Left cardiac atrium (tissue), 4 donors: ENCODE measurements at regions of chr11 and their contacts with region 1.

Region 1: DNA sequence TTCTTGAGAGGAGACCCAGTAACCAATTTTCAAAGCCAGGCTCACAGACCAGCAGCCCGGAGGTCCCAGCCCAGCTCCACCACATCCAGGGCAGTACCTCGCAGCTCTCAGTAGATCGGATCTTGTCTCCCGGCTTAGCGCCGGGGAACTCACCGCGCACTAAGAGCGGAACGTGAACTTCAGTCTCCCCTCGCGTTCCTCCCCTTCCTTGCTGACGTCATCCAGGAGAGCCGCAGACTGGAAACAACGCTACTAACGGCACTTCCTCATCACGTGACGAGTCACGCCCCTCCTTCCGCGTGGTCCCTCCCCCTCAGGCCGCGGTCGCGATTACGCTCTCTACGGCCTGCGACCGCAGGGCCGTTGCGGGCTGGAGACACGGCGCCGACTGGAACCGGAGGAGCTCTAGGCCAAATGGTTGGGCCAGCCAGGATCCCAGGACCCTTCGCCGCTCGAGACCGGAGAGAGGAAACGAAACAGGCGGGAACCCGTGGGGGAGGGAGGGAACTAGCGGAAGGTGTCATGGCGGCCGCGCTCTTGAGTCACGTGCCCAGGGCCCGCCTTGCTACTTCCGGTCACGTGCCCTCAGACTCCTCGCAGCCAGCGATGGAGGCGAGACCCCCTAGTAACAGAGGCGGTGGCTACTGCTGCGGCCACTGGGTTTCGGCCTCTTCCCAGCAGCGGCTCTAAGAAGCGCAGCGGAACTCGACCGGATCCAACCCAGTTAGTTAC is at the starts of genes GTF2H1 and HPS5:
- DNase-seq: peak; percentile 97
- ATAC-seq: peak; percentile 99
- total RNA-seq, gene GTF2H1: 22.2 to 22.4 TPM
- total RNA-seq, gene HPS5: 10.8 to 12.7 TPM

Region 2: DNA sequence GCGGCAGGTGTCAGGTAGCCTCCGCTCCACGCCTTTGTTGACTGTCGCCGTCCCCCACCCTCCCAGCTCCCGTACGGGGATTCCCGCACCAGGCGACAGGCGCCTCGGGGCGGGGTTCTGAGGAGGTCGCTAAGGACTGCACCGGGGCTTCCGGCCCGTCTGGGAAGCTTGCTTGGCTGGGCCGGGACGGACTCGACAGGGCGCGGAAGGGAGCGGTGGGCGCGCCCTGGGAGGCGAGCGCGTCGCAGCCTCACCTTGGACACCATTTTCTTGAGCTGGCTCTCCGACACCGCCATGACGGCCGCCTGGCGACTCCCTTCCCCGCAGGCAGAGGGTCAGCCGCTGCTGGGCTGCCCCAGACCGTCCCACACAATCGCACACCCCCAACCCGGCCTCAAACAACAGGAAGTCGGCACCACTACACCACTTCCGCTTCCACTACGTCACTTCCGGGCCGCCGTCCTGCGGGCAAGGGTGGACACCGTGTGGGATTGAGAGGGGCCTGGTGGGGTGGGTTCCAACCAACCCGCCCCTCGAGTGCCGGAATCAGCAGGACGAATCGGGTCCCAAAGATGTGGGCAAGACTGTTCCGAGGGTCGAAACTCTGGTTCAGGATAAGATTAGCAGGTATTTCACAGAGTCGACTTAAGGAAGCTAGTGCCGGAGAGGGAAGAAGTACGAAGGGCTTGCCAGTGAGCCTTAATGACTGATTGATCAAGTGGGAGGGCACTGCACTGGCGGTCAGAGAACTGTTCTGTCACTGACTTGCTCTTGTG is 204.6 kb after region 1 on chr11 and contains the start of gene TSG101:
- intact Hi-C with region 1: loop called in 1 of 2 experiments (anchors 10 kb)
- DNase-seq: peak; percentile 97
- ATAC-seq: peak; percentile 99 to 100
- total RNA-seq, gene TSG101: 49.8 to 51.1 TPM